ENCODE measurements at regions of chr7 and their contacts with region 1.

Region 1: GRCh38 chr7:101542527-101543241 is 86.4 kb downstream of the MYL10 start:
- DNase-seq: peak; percentile 57
- ATAC-seq: peak; percentile 55

Region 2: GRCh38 chr7:101378751-101379184 is 163.9 kb before region 1 on chr7:
- intact Hi-C with region 1: loop called (anchors 10 kb)
- DNase-seq: no peak
- ATAC-seq: peak; percentile 34

Region 3: GRCh38 chr7:101733713-101734475 is 191.2 kb after region 1 on chr7:
- intact Hi-C with region 1: no loop called
- DNase-seq: peak; percentile 68
- ATAC-seq: peak; percentile 91

Region 4: DNA sequence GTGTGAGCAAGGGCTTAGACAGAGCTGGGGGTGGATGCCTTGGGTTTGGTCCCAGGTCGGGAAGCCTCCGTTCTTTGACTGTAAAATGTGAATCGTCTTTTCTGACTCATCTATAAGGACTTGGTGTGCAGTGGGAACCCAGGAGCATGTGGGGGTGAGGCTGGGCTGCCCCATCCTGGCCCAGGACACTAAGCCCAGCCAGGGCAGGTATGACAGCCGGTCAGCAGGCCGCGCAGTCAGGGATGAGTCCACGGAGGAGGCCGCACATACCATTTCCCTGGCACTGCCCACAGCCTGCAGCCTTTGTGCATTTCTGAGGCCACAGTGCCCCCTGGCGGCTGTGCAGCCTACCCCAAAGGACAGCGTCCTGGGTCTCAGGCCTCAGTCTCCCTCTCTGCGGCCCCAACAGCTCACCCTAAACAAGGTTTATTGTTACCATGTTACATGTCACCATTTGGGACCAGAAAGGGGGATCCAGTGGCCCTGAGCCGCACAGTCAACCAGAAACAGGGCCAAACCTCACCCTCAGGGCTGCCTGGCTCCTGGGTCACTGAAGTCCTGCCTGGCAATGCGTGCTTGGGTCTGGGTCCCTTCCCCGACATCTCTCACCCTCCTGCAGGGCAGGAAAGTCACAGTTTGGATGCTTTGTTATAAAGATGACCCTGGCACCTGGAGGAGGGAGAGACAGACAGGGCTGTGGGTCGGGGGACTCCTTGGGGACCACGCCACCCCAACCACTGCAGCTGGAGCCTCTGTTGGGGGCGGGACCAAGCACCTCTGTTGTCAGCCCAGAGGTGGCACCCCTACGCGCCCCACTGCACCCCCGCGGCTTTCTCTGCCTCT is 729.6 kb after region 1 on chr7:
- intact Hi-C with region 1: loop called (anchors 2 kb)
- DNase-seq: peak; percentile 91
- ATAC-seq: peak; percentile 94

Measured in Right ventricle myocardium superior (tissue), 1 donor.